ENCODE measurements at regions of chr5 and their contacts with region 1.

Region 1: GRCh38 chr5:134541736-134542376 is 16.4 kb downstream of the JADE2 start:
- DNase-seq: peak; percentile 46
- ATAC-seq: no peak
- H3K4me3 Mint-ChIP-seq: no peak overlapping the region
- H3K27ac Mint-ChIP-seq: no peak overlapping the region
- H3K4me1 Mint-ChIP-seq: peaks cover 40% of the 10 kb centered on the region
- H3K27me3 Mint-ChIP-seq: no peaks in the 10 kb centered on the region

Region 2: DNA sequence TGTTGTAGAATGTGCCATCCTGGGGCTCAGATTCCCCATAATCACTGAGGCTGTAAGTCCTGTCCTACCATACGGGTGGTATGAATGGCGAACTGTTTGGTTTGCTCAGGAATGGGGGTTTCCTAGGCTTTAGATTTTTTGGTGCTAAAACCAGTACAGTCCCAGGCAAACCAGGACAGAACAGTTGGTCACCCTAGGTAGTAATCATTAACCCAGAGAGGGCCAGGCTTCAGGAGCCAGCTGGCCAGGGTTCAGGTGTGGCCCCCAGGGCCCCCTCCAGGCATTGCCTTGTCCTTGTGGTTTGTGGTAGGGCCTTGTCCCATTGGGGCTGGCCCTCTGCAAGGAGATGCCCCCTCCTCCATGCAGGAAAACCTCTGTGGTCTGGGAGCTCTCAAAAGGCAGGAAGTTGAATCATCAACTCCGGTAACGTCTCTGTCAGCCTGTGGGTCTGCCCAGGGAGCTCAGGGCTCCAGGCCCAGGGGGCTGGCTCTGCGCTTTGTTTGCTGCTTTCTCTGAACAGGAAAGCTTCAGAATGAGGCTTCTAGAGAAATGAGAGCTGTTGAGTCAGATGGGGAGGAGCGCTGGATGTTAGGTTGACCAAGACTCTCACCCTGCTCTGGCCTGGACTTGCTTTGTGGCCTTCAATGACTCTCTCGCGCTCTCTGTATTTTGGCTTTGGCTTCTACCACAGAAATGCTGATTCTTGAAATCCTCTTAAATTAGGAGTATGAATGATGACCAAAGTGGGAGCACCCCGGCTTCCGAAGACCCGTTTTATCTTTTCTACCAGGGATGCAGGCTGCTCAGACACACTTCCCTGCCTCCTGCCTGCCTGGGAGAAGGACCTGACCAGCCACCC is 38.5 kb before region 1 on chr5:
- POLR2A ChIA-PET with region 1: no interaction called
- DNase-seq: peak; percentile 68
- ATAC-seq: peak; percentile 99
- H3K4me3 Mint-ChIP-seq: peak overlapping the region; percentile 74
- H3K27ac Mint-ChIP-seq: peak overlapping the region; percentile 98
- H3K4me1 Mint-ChIP-seq: peaks cover 27% of the 10 kb centered on the region
- H3K27me3 Mint-ChIP-seq: no peaks in the 10 kb centered on the region

Region 3: DNA sequence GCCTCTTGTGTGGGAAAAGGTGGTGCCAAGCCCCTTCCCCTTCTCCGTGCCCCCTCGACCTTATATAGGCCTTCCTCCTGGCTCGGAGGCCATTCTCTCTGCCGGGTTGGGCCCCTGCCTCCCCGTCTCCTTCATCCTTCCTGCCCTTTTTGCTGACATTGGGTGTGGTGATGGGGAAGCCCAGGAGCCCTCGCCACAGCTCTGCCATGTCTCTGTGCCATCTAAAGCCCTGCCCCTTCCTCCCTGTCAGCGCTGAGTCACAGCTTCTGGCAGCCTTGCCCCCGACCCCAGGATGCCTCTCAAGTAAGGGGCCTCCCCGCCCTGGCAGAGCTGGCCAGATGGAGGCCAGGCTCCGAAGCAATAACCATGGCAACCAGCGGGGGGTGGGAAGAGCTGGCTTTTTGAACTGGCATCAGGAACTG is 14.0 kb after region 1 on chr5:
- POLR2A ChIA-PET with region 1: interaction called, 14 read pairs
- DNase-seq: peak; percentile 69
- ATAC-seq: peak; percentile 85
- H3K4me3 Mint-ChIP-seq: peak overlapping the region; percentile 50
- H3K27ac Mint-ChIP-seq: peak overlapping the region; percentile 88
- H3K4me1 Mint-ChIP-seq: peaks cover 24% of the 10 kb centered on the region
- H3K27me3 Mint-ChIP-seq: no peaks in the 10 kb centered on the region